GM12878 (cell line): ENCODE measurements at regions of chr19 and their contacts with region 1.

Region 1: DNA sequence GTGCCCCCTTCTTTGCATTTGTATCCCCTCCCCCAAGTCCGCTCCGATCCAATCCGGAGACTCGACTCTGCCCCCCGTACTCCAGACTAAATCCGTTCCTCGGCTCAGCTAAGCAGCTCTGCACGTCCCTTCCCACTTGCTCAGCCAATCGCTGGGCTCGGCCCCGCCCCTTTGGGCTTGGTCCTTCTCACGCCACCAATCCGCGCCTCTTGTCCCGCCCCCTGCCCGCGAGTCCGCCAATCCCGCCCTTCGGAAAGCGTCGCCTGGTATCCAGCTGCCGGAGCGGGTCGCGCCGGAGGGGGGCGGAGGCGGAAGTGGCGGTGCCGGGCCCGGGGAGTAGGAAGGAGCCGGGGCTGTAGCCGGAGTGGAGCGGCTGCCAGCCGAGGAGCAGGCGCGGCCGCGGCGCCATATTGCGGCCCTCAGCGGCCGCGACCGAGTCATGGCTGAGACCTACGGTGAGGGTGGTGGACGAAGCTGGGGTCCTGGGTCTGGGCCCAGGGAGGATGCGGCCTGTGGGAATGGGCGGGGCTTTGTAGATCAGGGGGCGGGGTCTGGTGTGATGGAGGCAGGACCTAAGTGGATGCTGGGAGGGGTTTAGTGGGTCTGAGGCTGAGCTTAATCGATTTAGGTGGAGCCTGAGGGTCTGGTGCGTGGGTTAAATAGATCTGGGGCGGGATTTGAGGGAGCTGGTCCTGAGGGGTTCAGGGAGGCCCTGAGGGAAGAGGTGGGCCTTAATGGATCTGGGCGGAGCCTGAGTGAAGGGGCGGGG is at the start of gene RAB4B:
- DNase-seq: peak; percentile 99
- ATAC-seq: peak; percentile 87
- H3K4me3 ChIP-seq: peak within 1 kb of the TSS; percentile 70
- H3K27ac ChIP-seq: peak within 1 kb of the TSS; percentile 100
- H3K4me1 ChIP-seq: peaks cover 39% of the 10 kb centered on the region
- H3K27me3 ChIP-seq: no peaks in the 10 kb centered on the region
- CTCF ChIP-seq: no peak
- EP300 ChIP-seq: peak in 1 of 2 experiments; percentile 18; a peak in 1 of 4 replicates
- POLR2A ChIP-seq: peak; percentile 95
- RAD21 ChIP-seq: no peak
- polyA plus RNA-seq, gene RAB4B: 0.60 to 3.2 TPM

Region 2: DNA sequence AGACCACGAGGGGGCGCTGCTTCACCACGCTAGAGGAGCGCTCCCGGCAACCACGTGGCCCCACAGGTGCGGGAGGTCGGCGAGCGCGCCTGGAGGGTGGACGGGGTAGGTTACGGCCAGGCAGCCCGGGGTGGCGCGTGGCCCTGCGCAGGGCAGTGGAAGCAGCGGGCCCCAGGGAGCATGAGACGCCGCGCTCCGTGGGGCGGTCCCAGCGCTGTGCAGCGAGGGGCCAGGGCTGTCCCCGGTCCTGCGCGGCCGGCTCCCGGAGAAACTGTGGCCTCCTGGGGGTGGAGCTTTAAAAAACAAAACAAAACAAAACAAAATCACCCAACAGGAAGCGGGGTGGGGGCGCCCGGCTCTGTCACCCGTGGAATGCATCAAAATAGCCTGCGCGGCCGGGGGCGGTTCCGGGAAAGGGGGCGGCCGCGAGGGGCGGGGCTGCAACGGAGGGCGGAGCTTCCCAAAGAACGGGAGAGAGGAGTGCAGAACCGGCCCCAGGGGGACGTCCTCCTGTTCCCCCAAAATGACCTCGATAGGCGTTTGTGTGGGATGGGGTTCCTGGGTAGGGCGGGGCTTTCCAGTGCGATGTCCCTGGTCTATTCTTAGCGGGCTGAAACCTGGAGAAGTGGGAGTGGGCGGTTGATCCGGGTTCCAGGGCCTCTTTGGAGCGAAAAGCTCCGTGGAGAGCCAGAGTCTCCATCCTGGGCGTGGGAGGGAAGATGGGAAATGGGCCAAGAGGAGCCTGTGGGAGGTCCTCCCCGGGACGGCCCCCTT is 115.0 kb before region 1 on chr19:
- CTCF ChIA-PET with region 1: interaction called, 13 read pairs
- POLR2A ChIA-PET with region 1: interaction called, 7 read pairs
- RAD21 ChIA-PET with region 1: interaction called, 25 read pairs
- SMC1A ChIA-PET with region 1: interaction called, 3 read pairs
- in situ Hi-C with region 1: no loop called
- intact Hi-C with region 1: no loop called
- DNase-seq: peak; percentile 24
- ATAC-seq: peak; percentile 97
- H3K4me3 ChIP-seq: peak overlapping the region; percentile 83
- H3K27ac ChIP-seq: no peak overlapping the region
- H3K4me1 ChIP-seq: peaks cover 6% of the 10 kb centered on the region
- H3K27me3 ChIP-seq: no peaks in the 10 kb centered on the region
- CTCF ChIP-seq: peak in 2 of 3 experiments; percentile 94 to 95; a peak in 5 of 6 replicates
- EP300 ChIP-seq: no peak
- POLR2A ChIP-seq: peak; percentile 68
- RAD21 ChIP-seq: peak; percentile 90

Region 3: GRCh38 chr19:40721936-40722661 is 56.0 kb before region 1 on chr19:
- CTCF ChIA-PET with region 1: interaction called, 10 read pairs
- POLR2A ChIA-PET with region 1: interaction called, 39 read pairs
- RAD21 ChIA-PET with region 1: interaction called, 24 read pairs
- SMC1A ChIA-PET with region 1: interaction called, 16 read pairs
- in situ Hi-C with region 1: no loop called
- intact Hi-C with region 1: no loop called
- DNase-seq: no peak
- ATAC-seq: no peak
- H3K4me3 ChIP-seq: no peak overlapping the region
- H3K27ac ChIP-seq: no peak overlapping the region
- H3K4me1 ChIP-seq: peaks cover 13% of the 10 kb centered on the region
- H3K27me3 ChIP-seq: no peaks in the 10 kb centered on the region
- CTCF ChIP-seq: no peak
- EP300 ChIP-seq: no peak
- POLR2A ChIP-seq: no peak
- RAD21 ChIP-seq: no peak

Region 4: GRCh38 chr19:40791349-40791748 is 13.2 kb after region 1 on chr19:
- CTCF ChIA-PET with region 1: interaction called, 50 read pairs
- POLR2A ChIA-PET with region 1: interaction called, 83 read pairs
- RAD21 ChIA-PET with region 1: interaction called, 56 read pairs
- SMC1A ChIA-PET with region 1: interaction called, 39 read pairs
- in situ Hi-C with region 1: no loop called
- intact Hi-C with region 1: no loop called
- DNase-seq: no peak
- ATAC-seq: no peak
- H3K4me3 ChIP-seq: no peak overlapping the region
- H3K27ac ChIP-seq: no peak overlapping the region
- H3K4me1 ChIP-seq: peaks cover 6% of the 10 kb centered on the region
- H3K27me3 ChIP-seq: no peaks in the 10 kb centered on the region
- CTCF ChIP-seq: no peak
- EP300 ChIP-seq: no peak
- POLR2A ChIP-seq: no peak
- RAD21 ChIP-seq: no peak

Region 5: DNA sequence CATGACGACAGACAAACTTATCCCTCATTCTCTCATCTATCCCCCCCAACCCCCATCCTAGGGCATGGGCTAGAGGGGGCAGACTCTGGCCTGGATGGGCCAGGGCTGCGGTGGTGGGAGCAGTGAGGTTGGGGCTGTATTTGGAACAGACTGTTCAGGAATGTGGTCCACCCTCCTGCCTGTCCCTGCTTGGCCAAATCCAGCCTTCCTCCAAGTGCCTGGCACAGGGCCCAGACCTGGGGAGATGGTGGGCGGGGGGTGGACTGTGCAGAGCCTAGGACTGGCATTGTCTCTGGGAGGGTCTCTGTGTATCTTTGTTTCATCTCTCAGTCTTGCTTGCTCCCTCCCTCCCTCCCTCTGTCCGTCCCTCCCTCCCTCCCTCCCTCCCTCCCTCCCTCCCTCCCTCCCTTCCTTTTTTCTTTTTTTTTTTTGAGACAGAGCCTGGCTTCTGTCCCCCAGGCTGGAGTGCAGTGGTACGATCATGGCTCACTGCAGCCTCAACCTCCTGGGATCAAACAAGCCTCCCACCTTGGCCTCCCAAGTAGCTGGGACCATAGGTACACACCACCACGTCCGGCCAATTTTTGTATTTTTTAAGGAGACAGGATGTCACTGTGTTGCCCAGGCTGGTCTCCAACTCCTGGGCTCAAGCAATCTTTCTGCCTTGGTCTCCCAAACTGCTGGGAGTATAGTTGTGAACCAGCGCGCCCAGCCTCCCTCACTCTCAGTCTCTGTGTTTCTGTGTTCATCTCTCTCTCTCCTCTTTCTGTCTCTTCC is 35.2 kb after region 1 on chr19:
- CTCF ChIA-PET with region 1: interaction called, 28 read pairs
- POLR2A ChIA-PET with region 1: interaction called, 37 read pairs
- RAD21 ChIA-PET with region 1: interaction called, 4 read pairs
- SMC1A ChIA-PET with region 1: interaction called, 7 read pairs
- in situ Hi-C with region 1: no loop called
- intact Hi-C with region 1: no loop called
- DNase-seq: no peak
- ATAC-seq: no peak
- H3K4me3 ChIP-seq: no peak overlapping the region
- H3K27ac ChIP-seq: no peak overlapping the region
- H3K4me1 ChIP-seq: peaks cover 4% of the 10 kb centered on the region
- H3K27me3 ChIP-seq: no peaks in the 10 kb centered on the region
- CTCF ChIP-seq: no peak
- EP300 ChIP-seq: no peak
- POLR2A ChIP-seq: peak; percentile 29; the same call in 1 of the 2 replicates
- RAD21 ChIP-seq: no peak

Region 6: GRCh38 chr19:40872209-40872608 is 94.1 kb after region 1 on chr19:
- CTCF ChIA-PET with region 1: no interaction called
- POLR2A ChIA-PET with region 1: no interaction called
- RAD21 ChIA-PET with region 1: no interaction called
- SMC1A ChIA-PET with region 1: no interaction called
- in situ Hi-C with region 1: no loop called
- intact Hi-C with region 1: no loop called
- DNase-seq: no peak
- ATAC-seq: no peak
- H3K4me3 ChIP-seq: no peak overlapping the region
- H3K27ac ChIP-seq: no peak overlapping the region
- H3K4me1 ChIP-seq: no peaks in the 10 kb centered on the region
- H3K27me3 ChIP-seq: no peaks in the 10 kb centered on the region; a peak in 1 of 4 replicates
- CTCF ChIP-seq: no peak
- EP300 ChIP-seq: no peak
- POLR2A ChIP-seq: no peak
- RAD21 ChIP-seq: no peak

Region 7: GRCh38 chr19:41310033-41310758 is 532.1 kb after region 1 on chr19 and contains the start of gene CCDC97:
- CTCF ChIA-PET with region 1: no interaction called
- POLR2A ChIA-PET with region 1: interaction called, 13 read pairs
- RAD21 ChIA-PET with region 1: no interaction called
- SMC1A ChIA-PET with region 1: no interaction called
- in situ Hi-C with region 1: no loop called
- intact Hi-C with region 1: no loop called
- DNase-seq: peak; percentile 68
- ATAC-seq: peak; percentile 81
- H3K4me3 ChIP-seq: peak within 1 kb of the TSS; percentile 98
- H3K27ac ChIP-seq: peak within 1 kb of the TSS; percentile 97
- H3K4me1 ChIP-seq: peaks cover 35% of the 10 kb centered on the region
- H3K27me3 ChIP-seq: no peaks in the 10 kb centered on the region
- CTCF ChIP-seq: no peak
- EP300 ChIP-seq: peak in 1 of 2 experiments; percentile 46; a peak in 1 of 4 replicates
- POLR2A ChIP-seq: peak; percentile 93
- RAD21 ChIP-seq: no peak
- polyA plus RNA-seq, gene CCDC97: 1.8 to 2.4 TPM